Right ventricle myocardium inferior (tissue), 1 donor: ENCODE measurements at regions of chr13 and their contacts with region 1.

Region 1: GRCh38 chr13:98959786-98960605 is 17.9 kb downstream of the DOCK9 start:
- DNase-seq: no peak
- ATAC-seq: peak; percentile 12

Region 2: GRCh38 chr13:98869408-98870090 is 90.4 kb before region 1 on chr13:
- intact Hi-C with region 1: no loop called
- DNase-seq: no peak
- ATAC-seq: peak; percentile 37

Region 3: GRCh38 chr13:98927951-98928927 is 31.8 kb before region 1 on chr13:
- intact Hi-C with region 1: loop called (anchors 5 kb)
- DNase-seq: no peak
- ATAC-seq: peak; percentile 84

Region 4: DNA sequence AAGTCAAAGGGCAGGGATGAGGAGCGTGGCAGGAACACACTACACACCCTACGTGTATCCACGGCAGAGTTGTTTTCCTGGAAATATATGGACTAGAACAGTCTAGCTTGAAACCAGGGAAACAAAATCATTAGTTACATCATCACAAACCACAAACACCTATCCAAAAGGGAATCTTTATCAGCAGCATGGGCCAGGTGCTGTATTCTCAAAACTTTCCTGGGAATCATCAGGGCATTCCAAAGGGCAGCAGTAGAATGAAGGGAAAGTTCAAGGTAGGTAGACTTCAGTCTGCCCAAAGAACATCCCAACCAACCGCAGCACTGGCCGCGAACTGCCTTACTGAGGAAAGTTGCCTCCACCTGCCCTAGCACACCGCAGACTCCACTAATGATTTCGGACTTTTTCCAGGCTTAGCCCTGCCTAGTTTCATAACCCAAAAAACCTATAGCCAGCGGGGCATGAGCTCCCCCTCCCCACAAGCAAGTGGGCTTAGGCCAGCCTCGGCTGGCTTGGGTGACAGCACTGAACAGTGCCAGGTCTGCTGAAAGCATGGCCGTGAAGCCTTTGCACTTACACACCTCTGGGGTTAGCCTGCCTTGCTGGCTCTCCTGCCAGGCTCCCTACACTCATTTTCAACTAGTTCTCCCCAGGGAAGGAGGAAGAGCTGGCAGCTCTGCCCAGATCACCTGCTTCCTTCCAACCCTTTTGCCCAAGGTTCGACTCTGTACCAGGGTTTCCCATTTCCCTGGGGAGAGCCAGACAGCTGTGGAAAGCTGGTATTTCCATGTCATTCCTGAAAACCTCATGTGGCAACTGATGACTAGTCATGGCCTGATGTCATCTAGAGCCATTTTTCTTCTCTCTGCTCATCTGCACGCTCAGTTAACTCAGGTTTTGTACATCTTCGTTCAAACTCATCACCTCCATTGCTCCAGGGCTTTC is 163.4 kb after region 1 on chr13:
- intact Hi-C with region 1: no loop called
- DNase-seq: no peak
- ATAC-seq: no peak